ENCODE measurements at regions of chr2 and their contacts with region 1.

Region 1: GRCh38 chr2:65215946-65216345 is 11.7 kb upstream of the ACTR2 start:
- DNase-seq: no peak
- H3K4me3 ChIP-seq: no peak overlapping the region
- CTCF ChIP-seq: no peak

Region 2: GRCh38 chr2:65227425-65228262 is 11.7 kb after region 1 on chr2 and contains the start of gene ACTR2:
- CTCF ChIA-PET with region 1: interaction called, 13 read pairs
- POLR2A ChIA-PET with region 1: interaction called, 3 read pairs
- DNase-seq: peak; percentile 78
- H3K4me3 ChIP-seq: peak within 1 kb of the TSS; percentile 100
- CTCF ChIP-seq: no peak

Region 3: GRCh38 chr2:65316072-65316471 is 100.1 kb after region 1 on chr2:
- CTCF ChIA-PET with region 1: no interaction called
- POLR2A ChIA-PET with region 1: no interaction called
- DNase-seq: no peak
- H3K4me3 ChIP-seq: no peak overlapping the region
- CTCF ChIP-seq: no peak